ENCODE measurements at regions of chr2 and their contacts with region 1.

Region 1: GRCh38 chr2:27211829-27212627 is at the starts of genes ATRAID and SLC5A6:
- DNase-seq: peak; percentile 59 to 93
- H3K4me3 ChIP-seq: peak within 1 kb of the TSS; percentile 77 to 97 (median 90)
- H3K27ac ChIP-seq: peak within 1 kb of the TSS; percentile 99
- H3K4me1 ChIP-seq: peaks cover 0 to 6% (median 2%) of the 10 kb centered on the region in 4 experiments; a peak in 5 of 7 replicates
- H3K27me3 ChIP-seq: no peaks in the 10 kb centered on the region
- CTCF ChIP-seq: no peak
- EP300 ChIP-seq: no peak
- POLR2A ChIP-seq: peak; percentile 68 to 97
- RAD21 ChIP-seq: no peak
- total RNA-seq, gene ATRAID: 103 and 109 TPM in 2 replicates
- total RNA-seq, gene SLC5A6: 118 and 123 TPM in 2 replicates

Region 2: DNA sequence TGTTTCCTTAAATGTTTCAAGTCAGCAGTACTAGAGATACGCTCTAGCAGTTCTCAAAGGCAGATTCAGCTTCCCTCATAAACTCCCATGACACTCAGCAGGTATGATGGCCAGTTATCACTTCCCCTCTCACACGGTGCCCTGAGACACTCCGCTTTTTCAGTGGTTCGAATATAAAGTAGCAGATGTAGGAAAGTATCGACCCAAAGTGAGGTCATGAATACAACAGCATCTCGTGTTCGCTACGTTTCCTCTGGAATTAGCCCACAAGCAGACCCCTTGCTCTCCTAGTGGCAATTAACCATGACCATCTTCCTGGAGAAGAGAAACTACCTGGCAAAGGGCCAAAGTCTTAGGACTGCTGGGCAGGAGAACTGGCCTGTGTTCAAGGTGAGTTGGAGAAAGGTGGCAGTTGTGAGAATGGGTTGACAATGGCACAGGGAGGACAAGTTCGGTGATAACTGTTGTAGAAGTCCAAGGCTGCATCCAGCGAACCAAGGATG is 169.8 kb before region 1 on chr2:
- CTCF ChIA-PET with region 1: no interaction called
- POLR2A ChIA-PET with region 1: no interaction called
- DNase-seq: no peak
- H3K4me3 ChIP-seq: no peak overlapping the region
- H3K27ac ChIP-seq: no peak overlapping the region
- H3K4me1 ChIP-seq: no peaks in the 10 kb centered on the region
- H3K27me3 ChIP-seq: no peaks in the 10 kb centered on the region
- CTCF ChIP-seq: no peak
- EP300 ChIP-seq: no peak
- POLR2A ChIP-seq: no peak
- RAD21 ChIP-seq: no peak

Region 3: GRCh38 chr2:27133905-27134780 is 77.9 kb before region 1 on chr2 and contains the start of gene PREB:
- CTCF ChIA-PET with region 1: interaction called, 4 read pairs
- POLR2A ChIA-PET with region 1: interaction called, 15 read pairs
- DNase-seq: peak; percentile 92 to 100
- H3K4me3 ChIP-seq: peak within 1 kb of the TSS; percentile 68 to 91 (median 88)
- H3K27ac ChIP-seq: peak within 1 kb of the TSS; percentile 25; the same call in 1 of the 2 replicates
- H3K4me1 ChIP-seq: peaks cover 0 to 4% (median 3%) of the 10 kb centered on the region in 4 experiments; a peak in 5 of 7 replicates
- H3K27me3 ChIP-seq: no peaks in the 10 kb centered on the region
- CTCF ChIP-seq: peak in 2 of 3 experiments; percentile 46 to 60; a peak in 2 of 4 replicates
- EP300 ChIP-seq: no peak
- POLR2A ChIP-seq: no peak
- RAD21 ChIP-seq: peak; percentile 56 to 67
- total RNA-seq, gene PREB: 51.2 and 54.1 TPM in 2 replicates

Region 4: DNA sequence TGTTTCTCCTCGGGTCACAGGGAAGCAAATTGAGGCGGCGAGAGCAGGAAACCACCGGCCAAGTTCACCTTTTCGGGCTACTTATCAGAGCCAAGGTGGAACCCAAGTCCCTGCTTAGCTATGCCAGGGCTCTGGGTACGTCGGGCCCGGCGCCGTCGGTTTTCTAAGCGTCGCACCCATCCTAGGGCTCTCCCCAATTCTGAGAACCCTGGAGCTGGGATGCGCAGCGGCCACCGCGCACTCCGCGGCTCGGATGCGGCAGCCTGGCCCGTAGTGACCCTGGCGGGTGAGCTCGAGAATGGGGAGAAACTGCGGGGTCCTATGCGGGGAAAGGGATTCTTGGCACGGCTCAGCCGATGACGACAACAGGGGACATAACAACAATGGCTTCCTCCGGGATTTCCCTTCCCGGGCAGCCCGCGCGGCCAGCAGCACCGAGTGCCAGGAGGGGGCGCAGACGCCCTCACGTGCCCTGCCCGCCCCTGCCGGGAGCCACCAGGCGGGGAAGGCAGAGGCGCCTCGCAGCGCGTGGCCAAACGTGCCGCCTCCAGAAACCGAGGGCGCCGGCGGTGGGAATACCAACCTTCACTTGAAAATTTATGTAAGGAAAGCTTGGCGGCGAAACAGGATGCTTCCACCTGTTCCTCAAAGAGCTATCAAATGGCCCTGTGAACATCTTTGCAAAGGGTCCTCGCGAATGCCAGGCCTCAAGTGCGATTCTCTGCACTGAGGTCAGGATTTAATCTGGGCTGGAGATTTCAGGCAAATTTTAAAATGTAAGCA is 52.9 kb after region 1 on chr2:
- CTCF ChIA-PET with region 1: interaction called, 4 read pairs
- POLR2A ChIA-PET with region 1: interaction called, 835 read pairs
- DNase-seq: peak in 1 of 2 experiments; percentile 89
- H3K4me3 ChIP-seq: peak overlapping the region; percentile 57 to 85 (median 62)
- H3K27ac ChIP-seq: no peak overlapping the region
- H3K4me1 ChIP-seq: peaks cover 3 to 19% (median 14%) of the 10 kb centered on the region in 4 experiments
- H3K27me3 ChIP-seq: peaks cover 39 to 69% (median 60%) of the 10 kb centered on the region in 4 experiments
- CTCF ChIP-seq: peak in 2 of 3 experiments; percentile 76 to 88; a peak in 3 of 4 replicates
- EP300 ChIP-seq: no peak
- POLR2A ChIP-seq: peak in 1 of 2 experiments; percentile 63; a peak in 2 of 3 replicates
- RAD21 ChIP-seq: peak; percentile 42 to 63

Region 5: DNA sequence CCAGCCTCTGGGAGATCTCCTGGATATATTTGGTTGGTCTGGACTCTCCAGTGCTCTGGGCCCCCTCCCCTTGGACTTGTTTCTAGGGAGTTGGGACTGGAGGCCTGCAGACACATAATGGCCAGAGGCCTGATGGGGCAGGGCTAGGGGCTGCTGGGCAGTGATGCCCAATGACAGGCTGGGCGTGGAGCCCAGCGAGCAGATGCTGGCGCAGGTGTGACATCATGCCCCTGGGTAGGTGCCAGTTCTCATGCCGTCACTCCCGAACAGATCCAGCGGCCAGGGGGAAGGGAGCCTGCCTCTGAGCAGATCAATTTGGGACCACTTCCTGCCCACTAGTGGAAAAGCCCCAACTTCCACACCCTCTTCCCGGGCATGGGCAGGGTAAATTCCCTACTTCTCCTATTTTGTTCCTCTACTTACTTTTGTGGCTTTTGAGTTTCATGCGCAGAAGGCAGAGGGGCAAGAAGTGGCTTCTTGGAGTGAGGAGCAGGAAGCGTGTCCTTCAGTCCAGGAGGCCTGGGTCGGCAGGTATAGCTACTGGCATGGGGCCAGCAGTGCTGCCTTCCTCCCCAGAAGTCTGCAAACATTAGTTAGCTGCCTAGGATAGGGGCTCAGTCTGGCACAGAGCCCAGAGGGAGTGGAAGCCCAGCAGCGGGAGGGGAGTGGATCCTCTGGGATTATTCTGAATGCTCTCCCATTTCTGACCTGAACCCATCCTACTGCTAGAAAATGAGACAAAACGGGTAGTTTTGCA is 104.8 kb after region 1 on chr2:
- CTCF ChIA-PET with region 1: no interaction called
- POLR2A ChIA-PET with region 1: no interaction called
- DNase-seq: no peak
- H3K4me3 ChIP-seq: no peak overlapping the region
- H3K27ac ChIP-seq: no peak overlapping the region
- H3K4me1 ChIP-seq: peaks cover 0 to 5% (median 0%) of the 10 kb centered on the region in 4 experiments; a peak in 3 of 7 replicates
- H3K27me3 ChIP-seq: no peaks in the 10 kb centered on the region
- CTCF ChIP-seq: no peak
- EP300 ChIP-seq: no peak
- POLR2A ChIP-seq: no peak
- RAD21 ChIP-seq: no peak

Region 6: DNA sequence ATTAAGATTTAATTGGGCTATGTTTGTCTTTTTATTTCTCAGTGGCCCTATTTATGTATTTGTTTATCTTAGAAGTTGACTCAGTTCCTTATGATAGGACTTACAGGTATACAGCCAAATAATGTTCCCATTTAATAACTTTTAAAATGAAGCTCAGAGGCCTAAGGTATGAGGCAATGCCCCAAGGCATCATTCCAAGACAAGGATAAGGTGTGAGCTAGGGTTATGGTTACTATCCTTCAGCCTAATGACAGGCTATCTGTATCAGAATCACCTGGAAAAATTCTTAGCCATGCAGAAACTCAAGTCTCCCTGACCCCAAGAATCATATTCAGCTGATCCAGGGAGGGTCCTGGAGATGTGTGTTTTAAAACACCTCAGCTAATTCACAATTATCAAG is 209.0 kb after region 1 on chr2:
- CTCF ChIA-PET with region 1: no interaction called
- POLR2A ChIA-PET with region 1: no interaction called
- DNase-seq: no peak
- H3K4me3 ChIP-seq: no peak overlapping the region
- H3K27ac ChIP-seq: no peak overlapping the region
- H3K4me1 ChIP-seq: no peaks in the 10 kb centered on the region
- H3K27me3 ChIP-seq: no peaks in the 10 kb centered on the region
- CTCF ChIP-seq: no peak
- EP300 ChIP-seq: no peak
- POLR2A ChIP-seq: no peak
- RAD21 ChIP-seq: no peak